CD4-positive, alpha-beta memory T cell (primary cell): ENCODE measurements at regions of chr11 and their contacts with region 1.

Region 1: GRCh38 chr11:17230867-17231851 is 23.4 kb upstream of the PIK3C2A start:
- DNase-seq: peak in 4 of 5 donors; percentile 26 to 53 (median 39)
- H3K4me3 ChIP-seq: no peak overlapping the region
- H3K4me3 Mint-ChIP-seq: peak overlapping the region in 7 of 8 donors; percentile 0 to 77 (median 36)
- H3K27ac ChIP-seq: no peak overlapping the region
- H3K27ac Mint-ChIP-seq: peak overlapping the region in 2 of 7 donors; percentile 52 to 56
- H3K4me1 ChIP-seq: peaks cover 17% of the 10 kb centered on the region
- H3K4me1 Mint-ChIP-seq: peaks cover 9 to 19% (median 14%) of the 10 kb centered on the region in 4 donors
- H3K27me3 ChIP-seq: no peaks in the 10 kb centered on the region
- H3K27me3 Mint-ChIP-seq: peaks cover 0 to 1% of the 10 kb centered on the region in 2 donors

Region 2: DNA sequence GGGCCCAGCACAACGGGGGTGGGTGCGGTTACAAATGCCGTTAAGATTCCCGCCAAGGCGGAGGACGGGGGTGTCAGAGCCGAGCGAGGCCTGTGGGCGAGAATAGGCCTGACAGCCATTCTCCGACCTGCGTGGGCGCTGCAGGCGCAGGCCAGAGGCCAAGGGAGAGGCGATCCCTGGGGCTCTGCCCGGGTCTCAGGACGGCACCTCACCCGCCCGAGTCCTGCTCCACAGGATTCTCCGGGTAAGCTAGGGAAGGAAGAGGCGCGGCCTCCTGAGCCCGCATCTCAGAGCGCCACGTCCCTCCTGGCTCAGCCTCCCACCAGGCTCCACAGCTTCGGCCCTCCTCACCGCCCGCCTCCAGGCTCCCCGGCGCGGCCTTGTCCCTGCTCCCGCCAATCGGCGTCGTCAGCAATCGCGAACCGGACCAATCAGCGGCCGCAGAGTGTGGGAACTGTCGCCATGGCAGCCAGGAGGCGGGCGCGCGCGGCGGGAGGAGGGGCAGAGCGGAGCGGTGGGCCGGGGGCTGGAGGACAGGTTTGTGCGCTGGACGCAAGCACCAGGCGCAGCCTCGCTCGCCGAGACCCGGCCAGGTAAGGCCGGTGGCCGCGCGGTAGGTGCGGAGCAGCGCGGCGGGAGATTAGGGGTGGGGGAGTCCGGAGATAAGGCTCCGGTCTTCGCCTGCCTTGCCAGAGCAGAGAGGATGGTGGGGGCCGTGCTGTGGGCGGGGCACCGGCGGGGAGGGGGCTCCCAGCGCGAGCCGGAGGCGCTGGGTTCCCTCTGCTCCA is 45.3 kb after region 1 on chr11 and contains the start of gene NUCB2:
- CTCF ChIA-PET with region 1: interaction called, 4 read pairs
- POLR2A ChIA-PET with region 1: interaction called, 6 read pairs
- intact Hi-C with region 1: loop called (anchors 2 kb)
- DNase-seq: peak; percentile 93 to 95 (median 93)
- H3K4me3 ChIP-seq: peak within 1 kb of the TSS; percentile 71 to 89
- H3K4me3 Mint-ChIP-seq: peak within 1 kb of the TSS; percentile 80 to 97 (median 88)
- H3K27ac ChIP-seq: peak within 1 kb of the TSS; percentile 82
- H3K27ac Mint-ChIP-seq: peak within 1 kb of the TSS; percentile 75 to 97 (median 95)
- H3K4me1 ChIP-seq: peaks cover 36% of the 10 kb centered on the region
- H3K4me1 Mint-ChIP-seq: peaks cover 18 to 45% (median 31%) of the 10 kb centered on the region in 4 donors
- H3K27me3 ChIP-seq: no peaks in the 10 kb centered on the region
- H3K27me3 Mint-ChIP-seq: no peaks in the 10 kb centered on the region
- total RNA-seq, gene NUCB2: 53.2 to 57.6 TPM

Region 3: DNA sequence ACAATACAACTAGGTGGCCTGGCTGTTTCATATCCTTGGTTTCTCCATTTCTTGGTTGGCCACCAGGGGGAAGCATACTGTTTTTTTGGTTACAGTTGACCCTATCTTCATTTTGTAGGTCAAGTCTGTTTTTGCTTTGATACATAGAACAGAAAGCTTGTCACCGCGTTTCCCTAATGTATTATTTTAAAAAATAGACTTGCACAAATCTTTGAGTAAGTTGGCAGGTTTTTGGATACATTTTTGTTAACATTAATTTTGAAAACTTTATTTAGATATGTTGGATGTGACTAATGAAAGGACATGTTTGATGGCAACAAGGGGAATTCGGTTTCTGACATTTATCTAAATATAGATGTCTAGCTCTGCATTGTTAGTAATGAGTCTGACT is 123.4 kb after region 1 on chr11:
- CTCF ChIA-PET with region 1: interaction called, 26 read pairs
- POLR2A ChIA-PET with region 1: interaction called, 3 read pairs
- intact Hi-C with region 1: loop called (anchors 1 kb)
- DNase-seq: peak; percentile 62 to 71 (median 65)
- H3K4me3 ChIP-seq: no peak overlapping the region
- H3K4me3 Mint-ChIP-seq: peak overlapping the region in 7 of 8 donors; percentile 74 to 98 (median 94)
- H3K27ac ChIP-seq: no peak overlapping the region
- H3K27ac Mint-ChIP-seq: peak overlapping the region in 5 of 7 donors; percentile 22 to 76 (median 64)
- H3K4me1 ChIP-seq: peaks cover 29% of the 10 kb centered on the region
- H3K4me1 Mint-ChIP-seq: peaks cover 17 to 44% (median 28%) of the 10 kb centered on the region in 4 donors
- H3K27me3 ChIP-seq: no peaks in the 10 kb centered on the region
- H3K27me3 Mint-ChIP-seq: peaks cover 0 to 1% of the 10 kb centered on the region in 2 donors

Region 4: DNA sequence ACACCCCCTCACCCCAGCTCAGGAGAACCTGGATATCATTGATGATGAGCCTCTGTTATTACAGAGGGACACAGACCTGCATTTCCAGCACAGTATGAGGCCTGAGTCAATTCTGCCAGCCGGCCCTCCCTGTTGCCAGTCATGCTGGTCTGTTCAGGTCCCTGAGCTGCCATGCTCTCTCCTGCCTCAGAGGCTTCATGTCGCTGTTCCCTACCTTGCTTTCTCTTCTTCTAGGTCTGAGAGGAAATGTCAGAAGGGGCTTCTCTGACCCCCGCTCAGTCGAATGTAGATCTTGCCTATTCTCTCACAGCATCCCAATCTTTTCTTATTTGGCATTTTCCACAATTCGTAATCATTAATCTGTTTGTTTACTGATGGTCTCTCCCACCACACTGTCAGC is 267.3 kb after region 1 on chr11:
- CTCF ChIA-PET with region 1: interaction called, 47 read pairs
- POLR2A ChIA-PET with region 1: no interaction called
- intact Hi-C with region 1: no loop called
- DNase-seq: no peak
- H3K4me3 ChIP-seq: no peak overlapping the region
- H3K4me3 Mint-ChIP-seq: no peak overlapping the region
- H3K27ac ChIP-seq: no peak overlapping the region
- H3K27ac Mint-ChIP-seq: peak overlapping the region in 2 of 7 donors; percentile 62 to 74
- H3K4me1 ChIP-seq: no peaks in the 10 kb centered on the region
- H3K4me1 Mint-ChIP-seq: no peaks in the 10 kb centered on the region
- H3K27me3 ChIP-seq: no peaks in the 10 kb centered on the region
- H3K27me3 Mint-ChIP-seq: peaks cover 0 to 1% of the 10 kb centered on the region in 2 donors

Region 5: DNA sequence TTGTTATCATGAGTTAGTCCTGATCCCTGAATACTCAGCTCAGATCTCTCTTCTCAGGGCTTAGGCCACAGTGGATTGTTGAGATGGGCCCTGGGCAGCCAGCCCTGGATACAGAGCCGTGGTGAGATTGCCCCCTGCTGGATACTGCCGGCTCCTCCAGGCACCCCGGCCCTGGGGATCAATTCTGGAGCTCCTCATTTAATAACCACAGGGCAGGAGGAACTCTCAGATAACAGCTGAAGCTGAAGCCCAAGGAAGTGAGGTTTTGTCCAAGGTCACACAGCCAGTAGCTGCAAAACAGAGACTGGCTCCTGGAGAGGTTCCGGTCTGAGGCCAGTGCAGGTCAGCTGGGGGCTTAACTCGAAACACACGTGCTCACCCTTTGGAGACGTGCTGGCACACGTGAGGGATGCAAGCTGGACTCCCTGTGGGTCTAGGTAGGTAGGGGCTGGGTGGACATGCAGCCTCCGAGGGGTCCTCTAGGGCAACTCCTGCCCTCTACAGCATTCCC is 297.1 kb after region 1 on chr11:
- CTCF ChIA-PET with region 1: interaction called, 22 read pairs
- POLR2A ChIA-PET with region 1: no interaction called
- intact Hi-C with region 1: loop called (anchors 1 kb)
- DNase-seq: peak in 4 of 5 donors; percentile 21 to 31 (median 23)
- H3K4me3 ChIP-seq: no peak overlapping the region
- H3K4me3 Mint-ChIP-seq: no peak overlapping the region
- H3K27ac ChIP-seq: no peak overlapping the region
- H3K27ac Mint-ChIP-seq: no peak overlapping the region
- H3K4me1 ChIP-seq: no peaks in the 10 kb centered on the region
- H3K4me1 Mint-ChIP-seq: no peaks in the 10 kb centered on the region
- H3K27me3 ChIP-seq: no peaks in the 10 kb centered on the region
- H3K27me3 Mint-ChIP-seq: peaks cover 4 to 7% of the 10 kb centered on the region in 2 donors

Region 6: DNA sequence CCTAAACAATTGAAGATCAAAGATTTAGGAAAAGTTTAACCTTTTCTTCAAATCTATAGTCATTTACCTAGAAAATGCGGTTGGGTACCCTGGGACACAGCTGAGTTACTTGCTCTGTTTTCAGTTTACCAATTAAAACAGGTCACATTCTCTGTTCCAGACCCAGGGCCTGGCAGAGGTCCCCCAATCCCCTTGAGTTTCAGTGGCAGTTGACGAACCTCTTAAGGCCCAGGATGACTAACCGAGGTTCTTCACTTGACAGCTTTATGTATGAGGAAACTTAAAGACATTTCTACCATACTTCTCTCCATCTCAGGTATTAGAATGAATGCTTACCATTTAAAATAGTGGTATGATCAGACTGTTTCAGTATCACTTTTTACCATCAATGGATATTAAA is 1240.8 kb after region 1 on chr11:
- CTCF ChIA-PET with region 1: no interaction called
- POLR2A ChIA-PET with region 1: no interaction called
- intact Hi-C with region 1: no loop called
- DNase-seq: no peak
- H3K4me3 ChIP-seq: no peak overlapping the region
- H3K4me3 Mint-ChIP-seq: no peak overlapping the region
- H3K27ac ChIP-seq: no peak overlapping the region
- H3K27ac Mint-ChIP-seq: no peak overlapping the region
- H3K4me1 ChIP-seq: no peaks in the 10 kb centered on the region
- H3K4me1 Mint-ChIP-seq: no peaks in the 10 kb centered on the region
- H3K27me3 ChIP-seq: no peaks in the 10 kb centered on the region
- H3K27me3 Mint-ChIP-seq: no peaks in the 10 kb centered on the region